GM12878 (cell line): ENCODE measurements at regions of chr3 and their contacts with region 1.

Region 1: GRCh38 chr3:59049671-59050331 is at the start of gene CFAP20DC:
- DNase-seq: peak; percentile 62
- ATAC-seq: peak; percentile 98
- H3K4me3 ChIP-seq: peak within 1 kb of the TSS; percentile 66
- H3K27ac ChIP-seq: 0 out of 2 replicates have a peak within 1 kb of the TSS, but pooled peaks have one; percentile 10
- H3K4me1 ChIP-seq: no peaks in the 10 kb centered on the region
- H3K27me3 ChIP-seq: no peaks in the 10 kb centered on the region
- CTCF ChIP-seq: no peak
- EP300 ChIP-seq: no peak
- POLR2A ChIP-seq: peak; percentile 84
- RAD21 ChIP-seq: no peak
- polyA plus RNA-seq, gene CFAP20DC: 0.53 to 1.2 TPM

Region 2: GRCh38 chr3:58237238-58237940 is 812.4 kb before region 1 on chr3 and contains the start of gene ABHD6:
- CTCF ChIA-PET with region 1: no interaction called
- POLR2A ChIA-PET with region 1: no interaction called
- RAD21 ChIA-PET with region 1: no interaction called
- SMC1A ChIA-PET with region 1: no interaction called
- in situ Hi-C with region 1: no loop called
- intact Hi-C with region 1: no loop called
- DNase-seq: no peak
- ATAC-seq: peak; percentile 79
- H3K4me3 ChIP-seq: peak within 1 kb of the TSS; percentile 68
- H3K27ac ChIP-seq: peak within 1 kb of the TSS; percentile 44
- H3K4me1 ChIP-seq: peaks cover 13% of the 10 kb centered on the region
- H3K27me3 ChIP-seq: no peaks in the 10 kb centered on the region
- CTCF ChIP-seq: peak; percentile 33 to 58 (median 37); a peak in 5 of 6 replicates
- EP300 ChIP-seq: no peak
- POLR2A ChIP-seq: peak; percentile 48
- RAD21 ChIP-seq: peak; percentile 61
- polyA plus RNA-seq, gene ABHD6: 1.4 to 1.5 TPM

Region 3: GRCh38 chr3:58640700-58641372 is 409.0 kb before region 1 on chr3:
- CTCF ChIA-PET with region 1: interaction called, 28 read pairs
- POLR2A ChIA-PET with region 1: no interaction called
- RAD21 ChIA-PET with region 1: interaction called, 10 read pairs
- SMC1A ChIA-PET with region 1: interaction called, 21 read pairs
- in situ Hi-C with region 1: loop called (anchors 5 kb)
- intact Hi-C with region 1: loop called (anchors 1 kb)
- DNase-seq: no peak
- ATAC-seq: peak; percentile 97
- H3K4me3 ChIP-seq: no peak overlapping the region
- H3K27ac ChIP-seq: no peak overlapping the region
- H3K4me1 ChIP-seq: no peaks in the 10 kb centered on the region
- H3K27me3 ChIP-seq: no peaks in the 10 kb centered on the region
- CTCF ChIP-seq: peak; percentile 82 to 97 (median 94); a peak in 5 of 6 replicates
- EP300 ChIP-seq: no peak
- POLR2A ChIP-seq: no peak
- RAD21 ChIP-seq: peak; percentile 94

Region 4: DNA sequence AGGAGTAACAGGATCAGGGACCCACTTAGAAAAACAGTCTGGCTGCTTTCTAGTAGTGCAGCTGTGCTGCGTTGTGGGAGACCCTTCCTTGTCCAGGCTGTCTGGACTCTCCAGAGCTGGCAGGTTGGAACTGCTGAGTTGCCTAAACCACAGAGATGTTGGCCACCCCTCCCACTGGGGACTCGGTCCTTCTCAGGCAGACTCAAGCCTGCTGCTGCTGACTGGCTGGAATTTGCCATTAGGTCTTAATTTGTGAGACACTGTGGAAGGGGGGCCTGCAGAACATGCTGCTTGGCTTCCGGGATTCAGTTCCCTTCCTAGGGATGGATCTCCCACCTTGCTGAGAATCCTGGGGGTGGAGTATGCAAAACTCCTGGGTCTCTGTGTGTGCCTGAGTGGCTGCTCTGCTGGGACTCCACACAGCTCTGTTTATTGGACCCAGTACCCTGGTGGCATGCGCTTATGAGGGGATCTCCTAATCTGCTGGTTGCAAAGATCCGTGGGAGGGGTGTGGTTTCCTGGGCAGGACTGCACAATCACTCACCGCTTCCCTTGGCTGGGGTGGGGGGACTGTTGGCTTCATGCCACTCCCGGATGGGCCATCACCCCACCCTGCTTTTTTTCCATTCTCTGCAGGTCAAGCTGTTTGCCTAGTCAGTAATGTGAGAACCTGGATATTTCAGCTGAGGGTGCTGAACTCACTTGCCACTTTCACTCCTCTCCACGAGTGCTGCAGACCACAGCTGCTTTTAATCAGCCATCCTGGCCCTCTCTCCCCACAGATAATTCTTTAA is 150.4 kb before region 1 on chr3:
- CTCF ChIA-PET with region 1: interaction called, 11 read pairs
- POLR2A ChIA-PET with region 1: no interaction called
- RAD21 ChIA-PET with region 1: interaction called, 3 read pairs
- SMC1A ChIA-PET with region 1: interaction called, 3 read pairs
- in situ Hi-C with region 1: no loop called
- intact Hi-C with region 1: no loop called
- DNase-seq: peak; percentile 63
- ATAC-seq: peak; percentile 95
- H3K4me3 ChIP-seq: no peak overlapping the region
- H3K27ac ChIP-seq: no peak overlapping the region
- H3K4me1 ChIP-seq: peaks cover 8% of the 10 kb centered on the region; the same call in 1 of the 2 replicates
- H3K27me3 ChIP-seq: no peaks in the 10 kb centered on the region
- CTCF ChIP-seq: no peak
- EP300 ChIP-seq: peak; percentile 23 to 52; a peak in 2 of 4 replicates
- POLR2A ChIP-seq: no peak
- RAD21 ChIP-seq: no peak

Region 5: DNA sequence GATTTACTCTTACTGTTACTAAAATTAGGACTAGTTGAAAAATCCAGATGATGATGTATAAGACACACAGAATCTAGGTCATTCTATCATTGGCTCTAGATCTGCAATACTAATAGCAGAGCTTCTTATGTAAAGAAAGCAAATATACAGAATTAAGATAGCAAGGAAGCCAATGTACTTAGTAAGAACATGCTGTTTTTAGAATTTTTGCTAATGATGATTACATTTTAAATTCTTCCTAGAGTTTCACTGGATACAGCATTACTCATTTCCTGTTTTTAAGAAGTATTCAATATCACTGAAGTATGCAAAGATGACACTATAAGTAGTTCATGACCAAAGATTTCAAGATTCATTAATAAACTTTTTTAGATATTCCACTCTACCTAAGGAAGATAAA is 60.6 kb before region 1 on chr3:
- CTCF ChIA-PET with region 1: interaction called, 116 read pairs
- POLR2A ChIA-PET with region 1: no interaction called
- RAD21 ChIA-PET with region 1: interaction called, 67 read pairs
- SMC1A ChIA-PET with region 1: interaction called, 26 read pairs
- in situ Hi-C with region 1: no loop called
- intact Hi-C with region 1: loop called (anchors 1 kb)
- DNase-seq: no peak
- ATAC-seq: no peak
- H3K4me3 ChIP-seq: no peak overlapping the region
- H3K27ac ChIP-seq: no peak overlapping the region
- H3K4me1 ChIP-seq: no peaks in the 10 kb centered on the region
- H3K27me3 ChIP-seq: no peaks in the 10 kb centered on the region
- CTCF ChIP-seq: no peak
- EP300 ChIP-seq: no peak
- POLR2A ChIP-seq: no peak
- RAD21 ChIP-seq: no peak

Region 6: GRCh38 chr3:58994746-58995330 is 55.0 kb before region 1 on chr3:
- CTCF ChIA-PET with region 1: interaction called, 116 read pairs
- POLR2A ChIA-PET with region 1: no interaction called
- RAD21 ChIA-PET with region 1: interaction called, 67 read pairs
- SMC1A ChIA-PET with region 1: interaction called, 37 read pairs
- in situ Hi-C with region 1: no loop called
- intact Hi-C with region 1: loop called (anchors 1 kb)
- DNase-seq: peak; percentile 23
- ATAC-seq: peak; percentile 86
- H3K4me3 ChIP-seq: no peak overlapping the region
- H3K27ac ChIP-seq: no peak overlapping the region
- H3K4me1 ChIP-seq: no peaks in the 10 kb centered on the region
- H3K27me3 ChIP-seq: no peaks in the 10 kb centered on the region
- CTCF ChIP-seq: peak; percentile 65 to 75 (median 72)
- EP300 ChIP-seq: no peak
- POLR2A ChIP-seq: no peak
- RAD21 ChIP-seq: peak; percentile 73

Region 7: GRCh38 chr3:59006634-59007517 is 42.9 kb before region 1 on chr3:
- CTCF ChIA-PET with region 1: interaction called, 8 read pairs
- POLR2A ChIA-PET with region 1: no interaction called
- RAD21 ChIA-PET with region 1: interaction called, 7 read pairs
- SMC1A ChIA-PET with region 1: interaction called, 16 read pairs
- in situ Hi-C with region 1: no loop called
- intact Hi-C with region 1: no loop called
- DNase-seq: no peak
- ATAC-seq: peak; percentile 84
- H3K4me3 ChIP-seq: no peak overlapping the region
- H3K27ac ChIP-seq: no peak overlapping the region
- H3K4me1 ChIP-seq: no peaks in the 10 kb centered on the region
- H3K27me3 ChIP-seq: no peaks in the 10 kb centered on the region
- CTCF ChIP-seq: no peak
- EP300 ChIP-seq: no peak
- POLR2A ChIP-seq: no peak
- RAD21 ChIP-seq: no peak

Region 8: DNA sequence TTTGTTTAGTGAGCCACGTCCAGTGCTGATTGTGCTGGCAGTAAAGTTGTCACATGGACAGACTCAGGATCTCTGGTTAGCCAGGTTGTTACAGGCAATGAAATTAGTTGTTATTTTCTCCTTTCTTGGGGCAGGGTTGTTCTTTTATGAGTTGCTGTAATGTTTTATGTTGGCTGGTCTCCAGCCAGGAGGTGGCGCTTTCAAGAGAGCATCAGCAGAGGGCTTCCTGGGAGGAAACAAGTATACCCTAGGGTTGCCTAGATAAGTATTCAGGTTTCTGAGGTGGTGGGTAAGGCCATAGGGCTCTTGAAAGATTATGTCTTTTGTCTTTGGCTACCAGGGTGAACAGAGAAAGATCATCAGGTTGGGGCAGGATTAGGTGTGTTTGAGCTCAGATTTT is 14.5 kb after region 1 on chr3:
- CTCF ChIA-PET with region 1: interaction called, 9 read pairs
- POLR2A ChIA-PET with region 1: no interaction called
- RAD21 ChIA-PET with region 1: interaction called, 3 read pairs
- SMC1A ChIA-PET with region 1: interaction called, 18 read pairs
- in situ Hi-C with region 1: no loop called
- intact Hi-C with region 1: no loop called
- DNase-seq: no peak
- ATAC-seq: peak; percentile 58
- H3K4me3 ChIP-seq: no peak overlapping the region
- H3K27ac ChIP-seq: no peak overlapping the region
- H3K4me1 ChIP-seq: no peaks in the 10 kb centered on the region; the same call in 1 of the 2 replicates
- H3K27me3 ChIP-seq: no peaks in the 10 kb centered on the region
- CTCF ChIP-seq: peak in 2 of 3 experiments; percentile 7 to 18; a peak in 1 of 6 replicates
- EP300 ChIP-seq: no peak
- POLR2A ChIP-seq: no peak
- RAD21 ChIP-seq: no peak